ENCODE measurements at regions of chrX and their contacts with region 1.

Region 1: DNA sequence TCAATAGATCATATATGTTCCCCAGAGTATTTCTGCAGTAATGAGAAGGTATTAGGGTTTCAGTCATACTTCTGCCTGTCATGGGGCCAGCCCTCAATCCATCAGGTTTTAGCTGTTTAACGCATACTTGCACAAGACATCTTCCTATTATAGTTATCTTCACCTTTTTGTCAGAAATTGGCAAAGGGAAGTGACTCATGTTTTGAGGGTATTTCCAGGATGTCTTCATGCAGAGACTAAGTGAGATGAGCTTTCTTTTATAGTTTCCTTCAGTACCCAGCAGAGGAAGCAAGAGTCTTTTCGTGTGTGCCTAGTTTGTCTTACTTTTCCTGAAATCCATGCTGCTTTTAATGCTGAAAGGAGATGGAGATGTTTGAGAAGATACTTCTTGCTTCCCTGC is 9.5 kb downstream of the CSTF2 start:
- DNase-seq: no peak
- ATAC-seq: no peak
- H3K4me3 ChIP-seq: no peak overlapping the region
- H3K27ac ChIP-seq: no peak overlapping the region
- H3K4me1 ChIP-seq: no peaks in the 10 kb centered on the region
- H3K27me3 ChIP-seq: peaks cover 0 to 10% (median 0%) of the 10 kb centered on the region in 3 donors
- CTCF ChIP-seq: no peak

Region 2: DNA sequence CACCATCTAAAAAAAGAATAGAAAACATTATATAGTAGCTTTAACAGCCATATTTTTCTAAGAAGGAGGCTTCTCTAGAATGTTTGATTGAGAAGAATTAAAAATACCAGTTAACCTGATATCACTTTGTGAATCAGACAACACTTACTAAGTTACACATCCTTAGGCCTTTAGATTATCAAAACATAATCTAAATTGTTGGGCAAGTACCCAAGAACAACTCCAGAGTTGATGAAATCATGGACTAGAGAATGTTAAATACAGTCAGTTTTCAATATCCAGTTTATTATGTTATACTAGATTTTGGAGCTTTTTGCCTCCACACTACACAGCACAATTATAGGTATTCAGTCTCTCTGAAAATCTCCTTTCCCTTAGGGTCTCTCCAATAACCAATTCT is 179.4 kb after region 1 on chrX:
- intact Hi-C with region 1: loop called in 1 of 2 experiments (anchors 10 kb)
- DNase-seq: no peak
- ATAC-seq: no peak
- H3K4me3 ChIP-seq: no peak overlapping the region
- H3K27ac ChIP-seq: no peak overlapping the region
- H3K4me1 ChIP-seq: no peaks in the 10 kb centered on the region
- H3K27me3 ChIP-seq: no peaks in the 10 kb centered on the region
- CTCF ChIP-seq: no peak

Region 3: GRCh38 chrX:101136235-101136634 is 306.5 kb after region 1 on chrX:
- intact Hi-C with region 1: no loop called
- DNase-seq: no peak
- ATAC-seq: no peak
- H3K4me3 ChIP-seq: no peak overlapping the region
- H3K27ac ChIP-seq: no peak overlapping the region
- H3K4me1 ChIP-seq: no peaks in the 10 kb centered on the region
- H3K27me3 ChIP-seq: no peaks in the 10 kb centered on the region
- CTCF ChIP-seq: no peak

Measured in psoas muscle (tissue), 8 donors.